Left lung (tissue), 14 donors: ENCODE measurements at regions of chr2 and their contacts with region 1.

Region 1: GRCh38 chr2:714005-714741 is 37.0 kb upstream of the TMEM18 start:
- DNase-seq: peak in 1 of 4 donors; percentile 63
- ATAC-seq: peak; percentile 86
- H3K4me3 ChIP-seq: no peak overlapping the region
- H3K27ac ChIP-seq: no peak overlapping the region
- H3K4me1 ChIP-seq: no peaks in the 10 kb centered on the region
- H3K27me3 ChIP-seq: peaks cover 0 to 45% of the 10 kb centered on the region in 2 donors
- CTCF ChIP-seq: peak; percentile 40 to 66

Region 2: DNA sequence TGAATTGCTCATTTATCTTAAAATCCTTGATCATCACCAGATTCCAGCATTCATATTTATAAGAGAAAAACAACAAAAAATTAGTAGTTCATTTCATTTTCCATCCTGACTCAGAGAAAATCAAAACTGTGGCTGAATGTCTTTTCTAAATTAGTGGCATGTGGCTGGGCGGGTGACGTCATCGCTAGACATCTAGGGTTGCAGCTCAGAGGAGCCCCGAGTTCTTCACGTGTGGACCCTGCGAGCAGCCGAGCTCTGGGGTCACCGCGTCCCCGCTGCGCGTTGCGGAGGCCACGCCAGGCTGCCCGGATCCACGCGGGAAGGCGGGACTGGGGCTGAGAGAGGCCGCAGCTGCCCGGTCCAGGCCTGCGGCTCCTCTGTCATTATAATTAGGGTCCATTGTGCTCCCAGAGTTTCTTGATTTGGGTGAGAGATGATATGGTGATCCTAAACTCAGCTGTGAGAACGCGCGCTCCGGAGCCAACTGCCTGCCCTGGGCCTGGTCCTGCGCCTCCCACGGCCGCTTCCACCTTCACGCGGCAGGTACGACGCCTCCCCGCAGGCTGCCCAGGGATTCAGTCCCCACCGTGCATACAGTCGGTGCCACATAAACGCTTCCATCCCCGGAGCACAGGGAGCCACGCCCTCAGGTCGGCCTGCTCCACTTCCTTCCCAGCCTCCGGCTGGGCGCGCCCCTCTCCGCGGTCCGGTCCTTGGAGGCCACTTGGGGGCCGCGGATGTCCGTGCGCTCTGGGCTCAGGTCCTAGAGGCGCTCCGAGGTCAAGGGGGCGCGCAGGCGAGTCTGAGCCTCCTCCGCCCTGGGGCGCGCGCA is 93.5 kb before region 1 on chr2:
- intact Hi-C with region 1: no loop called
- DNase-seq: no peak
- ATAC-seq: no peak
- H3K4me3 ChIP-seq: no peak overlapping the region
- H3K27ac ChIP-seq: no peak overlapping the region
- H3K4me1 ChIP-seq: no peaks in the 10 kb centered on the region
- H3K27me3 ChIP-seq: no peaks in the 10 kb centered on the region
- CTCF ChIP-seq: no peak

Region 3: DNA sequence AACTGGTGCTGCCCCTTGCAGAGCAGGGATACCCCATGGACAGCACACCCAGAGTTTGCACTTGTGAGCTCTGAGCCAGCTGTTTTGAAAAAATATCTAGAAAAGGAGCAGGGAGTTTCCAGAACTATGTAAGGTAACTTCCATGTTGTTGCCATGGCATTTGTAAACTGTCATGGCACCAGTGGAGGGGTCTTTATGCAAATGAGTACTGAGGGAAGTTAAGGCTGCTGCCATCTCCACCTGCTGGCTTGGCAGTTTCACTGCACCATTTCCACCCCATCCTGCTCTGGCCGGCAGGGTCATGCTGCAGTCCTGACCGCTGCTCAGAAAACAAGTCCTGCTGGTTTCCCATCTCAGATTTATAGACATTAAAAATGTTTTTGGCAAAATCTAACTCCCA is 184.1 kb after region 1 on chr2:
- intact Hi-C with region 1: loop called in 1 of 2 experiments (anchors 10 kb)
- DNase-seq: no peak
- ATAC-seq: no peak
- H3K4me3 ChIP-seq: no peak overlapping the region
- H3K27ac ChIP-seq: no peak overlapping the region
- H3K4me1 ChIP-seq: no peaks in the 10 kb centered on the region
- H3K27me3 ChIP-seq: peaks cover 0 to 5% of the 10 kb centered on the region in 2 donors
- CTCF ChIP-seq: no peak

Region 4: DNA sequence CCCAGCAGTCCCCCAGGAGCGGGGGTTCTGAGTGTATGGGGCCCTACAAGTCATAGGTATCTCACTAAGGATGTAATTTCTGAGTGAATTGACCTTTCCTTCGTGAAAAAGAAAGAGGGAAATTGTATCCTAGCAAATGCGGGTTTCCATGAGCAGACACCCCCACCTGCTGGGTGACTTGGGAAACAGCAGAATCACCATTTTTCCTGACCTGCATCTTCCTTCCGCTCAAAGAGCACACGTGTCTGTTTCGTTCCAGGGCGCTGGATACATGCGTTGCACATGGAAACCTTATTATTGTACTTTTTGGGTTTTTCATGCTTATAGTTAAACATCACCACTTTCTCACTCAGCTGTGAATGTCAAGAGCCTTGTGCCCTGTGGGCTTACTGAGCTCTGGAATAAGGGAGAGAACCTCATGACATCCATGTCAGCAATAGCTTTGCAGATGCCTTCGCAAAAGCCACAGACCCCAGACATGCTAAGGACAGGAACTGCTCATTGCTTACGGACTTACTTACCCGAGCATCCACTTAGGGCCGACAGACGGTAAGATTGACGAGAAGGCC is 831.9 kb after region 1 on chr2:
- intact Hi-C with region 1: loop called in 1 of 2 experiments (anchors 10 kb)
- DNase-seq: peak in 3 of 4 donors; percentile 22 to 60 (median 54)
- ATAC-seq: peak; percentile 68
- H3K4me3 ChIP-seq: no peak overlapping the region
- H3K27ac ChIP-seq: no peak overlapping the region
- H3K4me1 ChIP-seq: peaks cover 0 to 4% of the 10 kb centered on the region in 2 donors
- H3K27me3 ChIP-seq: peaks cover 0 to 12% of the 10 kb centered on the region in 2 donors
- CTCF ChIP-seq: peak; percentile 69 to 74